A673 (cell line): ENCODE measurements at regions of chr20 and their contacts with region 1.

Region 1: DNA sequence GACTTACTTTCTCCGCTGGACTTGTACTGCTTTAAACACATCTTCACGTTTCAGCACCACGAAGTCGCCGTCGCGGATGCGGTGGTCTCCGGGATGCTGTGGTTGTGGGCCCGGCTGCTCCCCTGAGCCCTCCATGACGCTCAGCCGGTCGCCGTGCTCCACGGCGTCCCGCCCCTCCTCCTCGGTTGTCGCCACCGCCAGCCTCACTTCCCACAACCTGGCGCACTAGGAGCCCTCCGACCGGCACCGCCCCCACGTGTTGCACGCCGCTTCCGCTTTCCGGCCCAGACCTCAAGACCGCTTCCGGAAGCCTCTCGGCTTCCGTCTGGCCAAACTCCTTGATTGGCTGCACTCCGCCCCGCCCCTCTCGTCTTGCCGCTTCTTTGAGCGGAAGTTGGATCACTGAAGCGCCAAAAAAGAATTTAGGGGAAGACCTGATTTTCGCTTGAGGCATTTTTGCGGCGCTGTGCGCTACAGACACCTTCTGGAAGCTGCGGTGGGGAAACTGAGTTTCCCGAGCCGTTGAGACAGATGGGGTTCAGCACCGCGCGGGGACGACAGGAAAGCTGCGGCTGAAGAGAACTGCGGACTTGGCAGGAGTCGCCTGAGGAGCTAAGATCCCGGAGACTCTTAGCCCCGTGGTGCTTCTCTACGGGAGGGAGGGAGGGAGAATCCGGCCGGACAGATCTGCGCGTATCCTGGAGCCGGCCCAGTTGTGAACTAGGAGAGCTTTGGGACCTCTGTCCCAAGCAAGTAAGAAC is at the starts of genes MCM8 and TRMT6:
- DNase-seq: peak; percentile 99
- H3K4me3 ChIP-seq: peak within 1 kb of the TSS; percentile 74
- H3K27ac ChIP-seq: peak within 1 kb of the TSS; percentile 85
- H3K4me1 ChIP-seq: peaks cover 15% of the 10 kb centered on the region
- H3K27me3 ChIP-seq: no peaks in the 10 kb centered on the region
- CTCF ChIP-seq: no peak
- total RNA-seq, gene MCM8: 49.7 and 56.4 TPM in 2 replicates
- total RNA-seq, gene TRMT6: 38.6 and 41.6 TPM in 2 replicates

Region 2: DNA sequence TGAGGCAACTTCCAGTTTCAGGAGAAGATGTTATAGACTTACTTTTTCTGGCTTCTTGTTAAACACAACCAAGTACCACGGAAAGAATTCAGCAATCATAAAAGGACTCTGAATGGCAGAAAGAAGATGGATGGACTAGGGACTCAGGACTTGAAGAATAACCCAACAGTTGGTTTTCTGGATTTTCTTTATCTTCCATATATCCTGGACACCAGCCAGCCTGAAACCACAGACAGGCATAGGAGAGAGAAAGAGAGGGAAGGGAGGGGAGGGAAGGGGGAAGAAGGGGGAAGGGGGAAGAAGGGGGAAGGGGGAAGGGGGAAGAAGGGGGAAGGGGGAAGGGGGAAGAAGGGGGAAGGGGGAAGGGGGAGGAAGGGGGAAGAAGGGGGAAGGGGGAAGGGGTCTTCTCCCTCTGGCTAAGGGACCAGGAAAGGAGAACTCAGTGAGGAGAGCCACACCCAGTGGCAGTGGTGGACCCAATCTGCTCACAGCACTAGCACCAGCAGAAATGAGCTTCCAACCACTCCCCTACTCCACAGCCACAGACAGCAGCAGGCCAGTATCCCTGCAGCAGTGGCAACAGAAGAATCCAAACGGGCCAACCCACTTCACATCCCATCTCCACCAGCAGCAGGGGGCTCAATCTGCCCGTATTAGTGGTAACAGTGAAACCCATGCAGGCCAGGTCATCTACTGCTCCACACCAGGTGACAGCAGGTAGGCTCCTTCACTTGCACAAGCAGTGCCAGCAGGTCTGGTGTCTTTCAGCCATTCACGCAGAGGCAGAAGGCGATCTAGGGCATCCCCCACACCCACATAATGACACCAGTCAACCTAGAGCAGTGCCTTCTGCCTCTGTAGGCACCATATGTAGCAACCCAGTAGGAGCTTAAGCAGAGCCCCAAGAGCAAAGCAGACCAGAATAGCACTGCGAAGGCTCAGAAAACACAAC is 78.7 kb before region 1 on chr20:
- CTCF ChIA-PET with region 1: no interaction called
- POLR2A ChIA-PET with region 1: no interaction called
- intact Hi-C with region 1: no loop called
- DNase-seq: no peak
- H3K4me3 ChIP-seq: no peak overlapping the region
- H3K27ac ChIP-seq: no peak overlapping the region
- H3K4me1 ChIP-seq: no peaks in the 10 kb centered on the region
- H3K27me3 ChIP-seq: no peaks in the 10 kb centered on the region
- CTCF ChIP-seq: no peak

Region 3: GRCh38 chr20:6053776-6054688 is 103.6 kb after region 1 on chr20 and contains the start of gene LRRN4:
- CTCF ChIA-PET with region 1: no interaction called
- POLR2A ChIA-PET with region 1: interaction called, 13 read pairs
- intact Hi-C with region 1: no loop called
- DNase-seq: no peak
- H3K4me3 ChIP-seq: no peak within 1 kb of the TSS
- H3K27ac ChIP-seq: no peak within 1 kb of the TSS
- H3K4me1 ChIP-seq: no peaks in the 10 kb centered on the region
- H3K27me3 ChIP-seq: peaks cover 25% of the 10 kb centered on the region
- CTCF ChIP-seq: no peak
- total RNA-seq, gene LRRN4: 0.15 TPM in 1 of 2 replicates, not detected in the other